ENCODE measurements at regions of chr11 and their contacts with region 1.

Region 1: DNA sequence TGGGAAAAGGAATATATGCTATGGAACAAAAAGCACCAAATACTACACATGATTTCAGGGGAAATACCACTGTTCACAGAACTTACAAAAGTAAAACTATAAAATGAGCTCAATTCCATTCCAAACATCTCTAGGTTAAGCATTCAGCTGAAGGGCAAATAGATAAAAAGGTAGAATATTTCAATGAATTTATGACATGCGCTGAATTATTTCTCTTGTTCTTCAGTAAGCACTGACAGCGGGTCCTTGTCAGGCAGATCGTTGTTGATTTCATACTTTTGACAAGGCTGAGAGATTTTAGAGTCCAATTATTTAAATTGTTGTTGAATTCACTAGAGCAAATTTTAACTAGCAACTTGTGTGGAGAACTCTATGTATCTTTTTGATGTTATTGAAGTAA is 449.6 kb downstream of the GUCY1A2 start:
- DNase-seq: no peak
- ATAC-seq: no peak

Region 2: DNA sequence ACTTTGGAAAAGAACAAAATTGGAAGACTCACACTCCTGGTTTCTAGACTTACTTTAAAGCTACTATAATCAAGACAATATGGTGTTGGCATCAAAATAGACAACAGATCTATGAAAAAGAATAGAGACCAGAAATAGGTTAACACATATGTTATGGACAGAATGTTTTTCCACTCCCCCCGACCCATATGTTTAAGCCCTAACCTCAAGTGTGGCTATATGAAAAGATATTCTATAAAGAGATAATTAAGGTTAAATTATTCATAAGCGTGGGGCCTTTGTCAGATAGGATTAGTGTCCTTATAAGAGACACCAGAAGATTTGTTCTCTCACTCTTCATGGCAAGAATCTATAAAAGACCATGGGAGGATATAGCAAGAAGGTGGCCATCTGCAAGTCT is 51.2 kb before region 1 on chr11:
- intact Hi-C with region 1: loop called (anchors 2 kb)
- DNase-seq: no peak
- ATAC-seq: no peak

Measured in Right ventricle myocardium inferior (tissue), 1 donor.